Heart right ventricle (tissue), 16 donors: ENCODE measurements at regions of chr16 and their contacts with region 1.

Region 1: GRCh38 chr16:30984669-30985400 is at the start of gene HSD3B7:
- DNase-seq: peak; percentile 91 to 92
- ATAC-seq: peak; percentile 84 to 94 (median 93)
- H3K4me3 ChIP-seq: peak within 1 kb of the TSS; percentile 12 to 64 (median 58)
- H3K27ac ChIP-seq: peak within 1 kb of the TSS in 8 of 10 donors; percentile 37 to 82 (median 72)
- H3K4me1 ChIP-seq: peaks cover 8 to 20% (median 14%) of the 10 kb centered on the region in 9 donors
- H3K27me3 ChIP-seq: no peaks in the 10 kb centered on the region
- CTCF ChIP-seq: peak; percentile 94 to 98 (median 97)
- total RNA-seq, gene HSD3B7: 3.3 to 13.3 (median 5.3) TPM

Region 2: DNA sequence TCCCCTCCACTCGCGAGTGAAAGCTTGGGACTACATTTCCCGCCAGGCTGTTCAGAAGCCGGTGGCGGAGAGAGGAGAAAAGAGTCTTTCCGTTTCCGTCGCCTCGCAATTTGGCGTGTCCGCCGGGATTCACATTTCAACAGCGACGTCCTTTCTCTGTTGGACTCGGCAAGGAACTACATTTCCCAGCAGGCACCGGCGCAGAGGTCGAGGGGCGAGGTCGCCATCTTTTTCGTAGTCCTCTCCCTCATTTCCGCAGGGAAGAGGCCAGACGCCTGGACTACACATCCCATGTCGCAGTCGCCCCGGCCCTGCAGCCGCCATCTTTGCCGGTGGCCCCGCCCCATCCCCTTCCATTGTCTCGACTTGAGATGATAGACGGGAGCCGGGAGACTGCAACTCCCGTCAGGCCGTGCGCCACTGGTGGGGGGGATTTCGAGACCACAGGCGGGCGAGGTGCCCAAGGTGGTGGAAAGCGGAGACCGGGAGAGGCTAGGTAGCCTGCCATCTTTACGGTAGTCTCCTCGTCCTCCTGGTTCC is 62.3 kb before region 1 on chr16:
- intact Hi-C with region 1: no loop called
- DNase-seq: peak; percentile 99 to 100
- ATAC-seq: peak; percentile 85 to 92 (median 88)
- H3K4me3 ChIP-seq: peak overlapping the region; percentile 50 to 89 (median 69)
- H3K27ac ChIP-seq: peak overlapping the region; percentile 86 to 97 (median 94)
- H3K4me1 ChIP-seq: peaks cover 0 to 24% (median 16%) of the 10 kb centered on the region in 9 donors
- H3K27me3 ChIP-seq: no peaks in the 10 kb centered on the region
- CTCF ChIP-seq: no peak

Region 3: DNA sequence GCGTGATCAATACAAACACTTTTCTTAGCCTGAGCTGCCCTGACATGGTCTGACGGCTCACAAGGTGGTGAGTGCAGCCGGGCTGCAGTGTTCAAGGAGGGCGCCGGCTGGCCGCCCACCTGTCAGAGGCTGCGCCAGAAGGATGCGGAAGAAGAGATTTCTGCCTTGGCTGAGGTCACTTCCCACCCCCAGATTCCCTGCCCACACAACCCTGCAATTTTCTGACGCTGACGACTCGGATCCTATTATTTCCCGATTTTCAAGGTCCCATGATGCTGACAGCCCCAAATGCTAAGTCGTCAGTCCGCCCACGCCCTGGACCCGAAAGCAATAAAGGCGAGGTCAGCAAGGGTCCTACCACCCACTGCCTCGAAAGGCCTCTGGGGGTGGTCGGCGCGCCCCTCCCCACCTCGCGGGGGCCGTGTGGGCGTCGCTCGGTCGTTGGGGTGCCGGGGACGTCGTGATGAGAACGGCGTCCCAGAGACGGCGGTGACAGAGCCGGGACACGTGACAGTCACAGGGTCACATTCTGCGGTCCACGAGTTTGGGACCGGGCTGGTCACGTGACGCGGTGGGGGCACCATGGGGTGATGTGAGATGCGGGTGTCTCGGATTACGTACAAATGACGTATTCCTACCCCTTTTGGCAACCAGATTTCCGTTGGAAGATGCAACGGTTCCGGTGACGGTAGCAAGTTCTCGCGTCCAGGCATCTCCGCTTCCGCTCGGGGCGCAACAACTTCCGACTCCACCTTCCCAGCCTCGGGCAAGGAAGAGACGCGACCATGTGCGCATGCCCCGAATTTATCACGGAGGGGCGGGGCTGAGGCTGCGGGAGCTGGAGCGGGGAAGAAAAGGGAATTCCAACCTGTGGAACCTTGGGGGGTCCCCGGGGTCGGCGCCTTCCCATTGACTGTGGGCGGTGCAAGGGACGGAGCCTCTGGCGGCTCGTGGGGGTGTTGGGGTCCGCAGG is 48.2 kb after region 1 on chr16 and contains the start of gene STX4:
- intact Hi-C with region 1: loop called in 6 of 10 experiments (anchors 5 to 10 kb)
- DNase-seq: peak; percentile 98 to 99
- ATAC-seq: peak; percentile 92 to 98 (median 96)
- H3K4me3 ChIP-seq: peak within 1 kb of the TSS; percentile 74 to 96 (median 90)
- H3K27ac ChIP-seq: peak within 1 kb of the TSS; percentile 90 to 99 (median 96)
- H3K4me1 ChIP-seq: peaks cover 0 to 40% (median 20%) of the 10 kb centered on the region in 9 donors
- H3K27me3 ChIP-seq: no peaks in the 10 kb centered on the region
- CTCF ChIP-seq: peak in 1 of 9 donors; percentile 13
- total RNA-seq, gene STX4: 31.8 to 53.8 (median 38.6) TPM

Region 4: DNA sequence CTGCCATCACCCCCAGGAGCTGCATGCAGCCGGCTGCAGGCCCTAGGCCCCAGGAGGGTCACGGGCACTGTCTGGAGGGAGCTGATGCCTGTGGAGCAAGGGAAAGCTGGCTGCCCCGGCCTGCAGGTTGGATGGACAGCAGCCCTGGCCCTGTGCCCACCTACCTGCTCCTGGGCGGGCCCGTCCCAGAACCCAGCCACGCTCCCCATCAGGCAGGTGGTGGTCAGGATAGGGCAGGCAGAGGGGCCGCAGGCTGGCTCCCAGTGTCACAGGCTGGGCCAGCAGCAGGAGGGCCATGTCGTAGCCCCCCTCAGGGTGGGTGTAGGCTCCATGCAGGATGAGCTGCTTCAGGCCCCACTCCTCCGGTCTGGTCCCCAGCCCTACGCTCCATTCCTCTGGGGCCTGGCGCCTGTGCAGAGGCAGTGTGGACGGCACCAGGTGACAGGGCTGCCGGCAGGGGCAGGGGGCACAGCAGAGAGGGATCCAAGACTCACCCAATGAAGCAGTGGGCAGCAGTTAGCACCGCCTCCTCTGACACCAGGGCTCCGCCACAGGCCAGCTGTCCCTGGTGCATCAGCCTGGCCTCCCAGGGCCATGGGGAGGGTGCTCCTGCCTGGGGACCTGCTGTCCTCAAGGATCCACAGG is 99.9 kb after region 1 on chr16:
- intact Hi-C with region 1: loop called in 2 of 10 experiments (anchors 10 kb)
- DNase-seq: no peak
- ATAC-seq: peak in 2 of 8 donors; percentile 16 to 22
- H3K4me3 ChIP-seq: no peak overlapping the region
- H3K27ac ChIP-seq: no peak overlapping the region
- H3K4me1 ChIP-seq: peaks cover 0 to 16% (median 6%) of the 10 kb centered on the region in 9 donors
- H3K27me3 ChIP-seq: no peaks in the 10 kb centered on the region
- CTCF ChIP-seq: no peak

Region 5: GRCh38 chr16:31142109-31143010 is 157.5 kb after region 1 on chr16:
- intact Hi-C with region 1: loop called in 8 of 10 experiments (anchors 1 to 10 kb)
- DNase-seq: peak; percentile 99
- ATAC-seq: peak; percentile 96 to 99 (median 98)
- H3K4me3 ChIP-seq: peak overlapping the region in 9 of 10 donors; percentile 33 to 62 (median 51)
- H3K27ac ChIP-seq: peak overlapping the region in 9 of 10 donors; percentile 69 to 91 (median 82)
- H3K4me1 ChIP-seq: peaks cover 8 to 35% (median 26%) of the 10 kb centered on the region in 9 donors
- H3K27me3 ChIP-seq: peaks cover 0 to 7% (median 0%) of the 10 kb centered on the region in 7 donors
- CTCF ChIP-seq: peak; percentile 88 to 99 (median 96)

Region 6: GRCh38 chr16:31427441-31428278 is 442.8 kb after region 1 on chr16:
- intact Hi-C with region 1: no loop called
- DNase-seq: peak; percentile 45 to 79
- ATAC-seq: peak in 7 of 8 donors; percentile 26 to 50 (median 30)
- H3K4me3 ChIP-seq: peak overlapping the region; percentile 21 to 60 (median 55)
- H3K27ac ChIP-seq: peak overlapping the region; percentile 86 to 99 (median 95)
- H3K4me1 ChIP-seq: peaks cover 0 to 71% (median 16%) of the 10 kb centered on the region in 9 donors
- H3K27me3 ChIP-seq: peaks cover 0 to 4% (median 0%) of the 10 kb centered on the region in 7 donors
- CTCF ChIP-seq: no peak

Region 7: GRCh38 chr16:31440516-31441184 is 455.8 kb after region 1 on chr16:
- intact Hi-C with region 1: loop called in 9 of 10 experiments (anchors 2 to 10 kb)
- DNase-seq: no peak
- ATAC-seq: no peak
- H3K4me3 ChIP-seq: no peak overlapping the region
- H3K27ac ChIP-seq: peak overlapping the region in 5 of 10 donors; percentile 8 to 93 (median 30)
- H3K4me1 ChIP-seq: peaks cover 0 to 37% (median 12%) of the 10 kb centered on the region in 9 donors
- H3K27me3 ChIP-seq: no peaks in the 10 kb centered on the region
- CTCF ChIP-seq: no peak

Region 8: GRCh38 chr16:31873556-31874365 is 888.9 kb after region 1 on chr16 and contains the start of gene ZNF267:
- intact Hi-C with region 1: loop called in 7 of 10 experiments (anchors 2 to 10 kb)
- DNase-seq: peak; percentile 91 to 96
- ATAC-seq: peak; percentile 95 to 98 (median 96)
- H3K4me3 ChIP-seq: peak within 1 kb of the TSS; percentile 79 to 98 (median 91)
- H3K27ac ChIP-seq: peak within 1 kb of the TSS; percentile 58 to 99 (median 87)
- H3K4me1 ChIP-seq: peaks cover 0 to 74% (median 31%) of the 10 kb centered on the region in 9 donors
- H3K27me3 ChIP-seq: no peaks in the 10 kb centered on the region
- CTCF ChIP-seq: no peak
- total RNA-seq, gene ZNF267: 4.0 to 13.5 (median 5.7) TPM